HEK293 (cell line): ENCODE measurements at regions of chr14 and their contacts with region 1.

Region 1: DNA sequence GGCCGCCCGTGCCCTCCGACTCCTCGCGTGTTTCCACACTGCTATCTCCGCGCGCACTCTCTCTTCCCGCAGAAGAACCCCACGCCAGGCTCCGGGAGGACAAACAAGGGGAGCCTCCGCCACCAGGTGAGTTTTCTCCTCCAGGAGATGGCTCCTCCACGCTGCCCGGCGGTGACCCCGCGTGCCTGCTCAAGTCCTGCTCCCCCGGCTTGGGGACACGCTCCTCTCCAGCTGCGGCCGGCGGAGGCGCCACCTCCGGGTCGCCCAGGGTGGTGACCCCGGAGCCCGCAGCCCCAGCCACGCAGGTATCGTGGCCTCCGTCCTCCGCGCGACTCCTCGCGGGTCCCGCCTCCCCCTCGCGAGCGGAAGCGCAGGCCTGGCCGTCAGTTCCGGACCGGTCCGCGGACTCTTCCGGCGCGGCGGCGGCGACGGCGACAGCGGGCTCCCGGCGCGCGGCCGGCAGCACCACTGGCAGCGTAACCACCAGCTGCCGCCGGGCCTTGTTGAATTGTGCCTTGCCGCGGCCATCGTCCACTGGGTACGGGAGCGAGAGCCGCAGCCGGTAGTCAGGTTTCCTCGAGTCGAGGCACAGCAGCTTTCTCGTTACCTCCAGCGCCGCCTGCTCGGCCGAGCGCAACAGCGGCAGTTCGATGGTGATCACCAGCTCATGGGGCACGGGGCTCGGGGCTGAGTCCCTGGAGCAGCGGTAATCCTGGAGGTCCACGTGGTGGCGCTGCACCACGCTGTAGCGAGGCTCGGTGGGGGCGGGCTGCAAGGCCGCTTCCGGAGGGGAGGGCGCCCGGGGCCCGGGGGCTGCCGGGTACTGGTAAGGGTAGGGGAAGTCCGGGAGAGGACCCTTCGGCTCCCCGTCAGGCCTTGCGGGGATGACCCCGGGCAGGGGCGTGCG is 1.2 kb downstream of the DNAAF2 start:
- H3K4me3 ChIP-seq: peak overlapping the region; percentile 98
- H3K27ac ChIP-seq: peak overlapping the region; percentile 94
- H3K4me1 ChIP-seq: no peaks in the 10 kb centered on the region
- CTCF ChIP-seq: peak; percentile 94

Region 2: DNA sequence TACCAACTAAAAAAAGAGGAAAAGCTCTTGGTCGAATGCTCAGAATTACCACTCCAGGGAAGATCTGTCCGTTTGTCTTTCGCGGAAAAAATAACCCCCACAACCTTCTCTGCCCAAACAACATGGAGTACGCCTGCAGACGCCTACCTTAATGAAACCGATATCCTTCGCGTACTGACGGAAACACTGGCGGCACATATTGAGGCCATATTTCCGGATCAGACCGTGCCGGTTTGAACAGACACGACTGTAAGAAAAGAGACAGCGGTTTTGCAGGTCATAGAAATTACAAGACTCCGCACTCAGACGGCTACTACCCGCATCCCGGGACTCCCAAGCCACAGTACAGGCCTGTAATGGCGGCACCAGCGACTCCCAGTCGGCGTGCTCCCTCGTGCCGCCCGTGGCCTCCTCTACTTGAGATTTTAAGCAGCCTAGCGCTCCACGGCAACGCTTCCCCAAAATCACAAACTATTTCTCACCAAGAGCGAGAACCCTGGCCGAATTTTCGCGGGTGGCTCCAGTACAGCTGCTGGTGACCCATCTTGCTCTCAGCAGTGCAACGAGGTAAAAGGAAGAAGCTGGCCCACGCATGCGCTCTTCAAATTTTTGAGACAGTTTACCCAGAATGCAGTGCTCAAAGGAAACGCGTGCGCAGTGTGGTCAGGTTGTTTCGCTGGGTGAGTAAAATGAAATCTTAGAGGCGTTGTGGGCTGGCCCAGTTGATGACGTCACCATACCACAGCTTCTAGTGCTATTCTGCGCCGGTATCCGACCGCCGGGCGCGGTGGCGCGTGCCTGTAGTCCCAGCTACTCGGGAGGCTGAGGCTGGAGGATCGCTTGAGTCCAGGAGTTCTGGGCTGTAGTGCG is 47.9 kb before region 1 on chr14 and contains the start of gene RPS29:
- CTCF ChIA-PET with region 1: no interaction called
- POLR2A ChIA-PET with region 1: interaction called, 14 read pairs
- H3K4me3 ChIP-seq: peak within 1 kb of the TSS; percentile 92
- H3K27ac ChIP-seq: peak within 1 kb of the TSS; percentile 76
- H3K4me1 ChIP-seq: peaks cover 9% of the 10 kb centered on the region
- CTCF ChIP-seq: no peak

Region 3: GRCh38 chr14:49598485-49599300 is 35.2 kb before region 1 on chr14 and contains the start of gene LRR1:
- CTCF ChIA-PET with region 1: interaction called, 6 read pairs
- POLR2A ChIA-PET with region 1: interaction called, 16 read pairs
- H3K4me3 ChIP-seq: peak within 1 kb of the TSS; percentile 87
- H3K27ac ChIP-seq: peak within 1 kb of the TSS; percentile 98
- H3K4me1 ChIP-seq: peaks cover 10% of the 10 kb centered on the region
- CTCF ChIP-seq: peak; percentile 5; the same call in 1 of the 2 replicates

Region 4: GRCh38 chr14:49767562-49768300 is 133.8 kb after region 1 on chr14 and contains the start of gene KLHDC2:
- CTCF ChIA-PET with region 1: interaction called, 16 read pairs
- POLR2A ChIA-PET with region 1: interaction called, 22 read pairs
- H3K4me3 ChIP-seq: peak within 1 kb of the TSS; percentile 99
- H3K27ac ChIP-seq: peak within 1 kb of the TSS; percentile 98
- H3K4me1 ChIP-seq: peaks cover 18% of the 10 kb centered on the region
- CTCF ChIP-seq: no peak

Region 5: DNA sequence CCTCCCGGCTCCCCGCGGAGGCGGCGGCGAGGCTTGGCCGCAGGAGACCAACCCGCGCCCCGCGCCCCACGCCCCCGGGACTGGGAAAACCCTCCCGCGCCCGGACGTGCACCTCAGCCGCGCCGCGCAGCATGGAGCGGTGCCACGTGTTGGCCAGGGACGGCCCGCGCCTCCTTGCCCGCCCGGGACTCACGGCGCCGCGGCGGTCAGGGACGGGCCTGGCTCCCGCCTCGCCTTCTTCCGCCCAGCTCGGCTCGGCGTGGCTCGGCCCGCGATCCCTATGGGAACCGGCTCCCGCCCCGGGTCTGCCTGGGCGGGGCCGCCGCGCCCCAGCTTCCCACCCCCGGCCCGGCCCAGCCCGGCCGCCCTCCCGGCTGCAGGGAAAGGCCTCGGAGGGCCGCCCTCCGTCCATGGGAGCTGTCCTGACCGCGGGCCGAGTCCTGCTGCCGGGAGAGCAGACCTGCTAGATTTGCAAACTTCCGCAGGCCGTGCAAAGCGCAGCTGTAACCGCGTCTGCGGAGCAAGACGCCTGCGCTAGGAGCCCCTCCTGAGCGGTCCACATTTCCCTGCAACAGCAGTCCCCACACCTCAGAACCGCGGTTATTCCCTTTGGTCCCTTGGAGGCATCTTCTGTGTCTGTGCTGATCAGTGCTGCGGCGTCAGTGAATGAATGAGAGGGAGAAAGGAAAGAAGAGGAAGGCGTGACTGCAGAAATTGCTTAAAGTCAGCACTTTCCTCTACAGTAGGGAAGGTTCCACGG is 762.9 kb after region 1 on chr14 and contains the start of gene CDKL1:
- CTCF ChIA-PET with region 1: no interaction called
- POLR2A ChIA-PET with region 1: no interaction called
- H3K4me3 ChIP-seq: peak within 1 kb of the TSS; percentile 51
- H3K27ac ChIP-seq: peak within 1 kb of the TSS; percentile 92
- H3K4me1 ChIP-seq: peaks cover 16% of the 10 kb centered on the region
- CTCF ChIP-seq: no peak